Activated B cell treated with CpG ODN at 0.5 μM for 24 hours (primary cell): ENCODE measurements at regions of chr17 and their contacts with region 1.

Region 1: DNA sequence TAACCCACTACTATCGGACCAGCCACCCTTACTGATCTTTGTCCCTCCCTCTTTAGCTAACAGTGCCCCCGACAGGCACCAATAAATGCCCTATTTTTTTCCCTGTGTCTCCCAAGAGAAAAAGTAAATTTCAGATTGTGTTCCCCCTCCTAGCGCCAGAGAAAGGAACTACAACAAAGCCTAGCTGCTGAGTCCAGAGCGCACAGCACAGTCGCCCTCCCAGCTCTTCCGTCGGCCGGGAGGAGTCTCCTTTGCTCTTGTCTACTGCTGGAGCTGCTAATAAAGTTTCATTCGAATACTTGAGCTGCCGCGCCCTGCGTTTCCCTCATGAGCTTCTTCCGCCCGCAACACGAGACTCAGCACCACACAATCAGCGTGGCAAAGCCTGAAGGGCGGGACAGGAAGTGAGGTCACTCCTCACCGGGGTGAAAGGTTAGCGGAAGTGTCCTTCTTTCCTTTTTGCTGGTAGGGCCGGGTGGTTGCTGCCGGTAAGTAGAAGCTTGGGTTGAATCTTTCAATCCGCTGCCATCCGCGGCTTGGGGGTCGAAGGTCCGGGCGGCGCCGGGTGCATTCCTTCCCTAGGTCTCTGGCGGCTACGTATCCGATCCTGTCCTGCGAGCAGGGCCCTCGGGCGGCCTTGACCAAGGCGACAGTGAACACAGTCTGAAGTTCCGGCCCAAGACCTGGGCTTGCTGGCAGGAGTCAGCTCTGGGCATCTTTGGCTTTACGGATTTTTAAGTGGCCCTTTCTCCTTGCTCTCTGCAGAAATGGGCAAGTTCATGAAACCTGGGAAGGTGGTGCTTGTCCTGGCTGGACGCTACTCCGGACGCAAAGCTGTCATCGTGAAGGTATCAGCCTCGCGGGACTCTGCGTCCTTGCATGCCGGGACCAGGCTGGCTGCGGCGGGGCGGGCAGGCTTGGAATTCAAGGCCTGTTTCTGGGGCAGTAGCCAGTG is at the start of gene RPL27:
- DNase-seq: peak; percentile 95
- ATAC-seq: peak; percentile 95
- H3K4me3 Mint-ChIP-seq: peak within 1 kb of the TSS; percentile 98
- H3K27ac Mint-ChIP-seq: peak within 1 kb of the TSS; percentile 97
- H3K4me1 Mint-ChIP-seq: peaks cover 31% of the 10 kb centered on the region
- H3K27me3 Mint-ChIP-seq: no peaks in the 10 kb centered on the region
- CTCF ChIP-seq: peak; percentile 78
- total RNA-seq, gene RPL27: 1,189 and 1,266 TPM in 2 replicates

Region 2: DNA sequence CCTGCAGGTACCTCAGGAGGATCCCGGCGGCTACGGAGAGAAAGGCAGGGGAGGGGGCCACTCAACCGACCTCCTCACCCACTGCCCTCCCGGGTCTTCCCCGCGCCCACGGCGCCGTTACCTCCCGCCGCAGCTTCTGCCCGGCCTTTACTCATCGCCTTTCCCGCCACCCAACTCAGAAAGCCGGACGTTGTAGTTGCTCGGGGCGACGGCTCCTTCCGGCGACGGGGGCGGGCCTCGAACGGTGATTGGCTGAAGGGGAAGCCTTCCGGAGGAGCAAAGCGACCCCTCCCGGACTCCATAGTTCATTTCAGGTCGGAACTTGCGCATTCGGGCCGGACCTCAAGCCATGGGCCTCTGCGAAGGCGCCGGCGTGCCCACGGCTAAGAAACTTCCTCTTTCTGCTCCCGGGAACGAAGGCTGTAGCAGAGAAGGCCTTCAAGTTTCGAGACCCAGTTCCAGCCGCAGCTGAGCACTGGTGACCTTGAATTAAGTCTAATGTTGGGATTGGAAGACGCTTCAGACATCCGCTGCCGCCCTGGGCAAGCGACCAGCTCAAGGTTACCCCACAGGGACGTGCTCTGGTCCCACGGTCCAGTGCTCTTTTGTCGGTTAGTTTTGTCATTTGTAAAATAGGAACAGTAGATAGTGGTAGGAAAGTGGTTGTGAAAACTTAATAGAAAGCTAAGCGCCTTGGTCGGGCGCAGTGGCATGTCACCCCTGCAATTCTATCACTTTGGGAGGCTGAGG is 420.6 kb before region 1 on chr17 and contains the start of gene PSMC3IP:
- CTCF ChIA-PET with region 1: interaction called, 10 read pairs
- POLR2A ChIA-PET with region 1: interaction called, 15 read pairs
- intact Hi-C with region 1: loop called (anchors 1 kb)
- DNase-seq: peak; percentile 86
- ATAC-seq: peak; percentile 90
- H3K4me3 Mint-ChIP-seq: peak within 1 kb of the TSS; percentile 95
- H3K27ac Mint-ChIP-seq: peak within 1 kb of the TSS; percentile 97
- H3K4me1 Mint-ChIP-seq: peaks cover 38% of the 10 kb centered on the region
- H3K27me3 Mint-ChIP-seq: no peaks in the 10 kb centered on the region
- CTCF ChIP-seq: no peak
- total RNA-seq, gene PSMC3IP: 9.0 and 10.8 TPM in 2 replicates

Region 3: GRCh38 chr17:42798383-42799380 is 199.6 kb before region 1 on chr17 and contains the starts of genes CNTD1 and COA3:
- CTCF ChIA-PET with region 1: no interaction called
- POLR2A ChIA-PET with region 1: interaction called, 11 read pairs
- intact Hi-C with region 1: no loop called
- DNase-seq: peak; percentile 69
- ATAC-seq: peak; percentile 100
- H3K4me3 Mint-ChIP-seq: peak within 1 kb of the TSS; percentile 97
- H3K27ac Mint-ChIP-seq: peak within 1 kb of the TSS; percentile 81
- H3K4me1 Mint-ChIP-seq: peaks cover 28% of the 10 kb centered on the region
- H3K27me3 Mint-ChIP-seq: no peaks in the 10 kb centered on the region
- CTCF ChIP-seq: no peak
- total RNA-seq, gene CNTD1: not detected in 2 replicates
- total RNA-seq, gene COA3: 41.4 and 48.0 TPM in 2 replicates

Region 4: GRCh38 chr17:42843358-42843934 is 154.8 kb before region 1 on chr17:
- CTCF ChIA-PET with region 1: interaction called, 19 read pairs
- POLR2A ChIA-PET with region 1: interaction called, 8 read pairs
- intact Hi-C with region 1: loop called (anchors 1 kb)
- DNase-seq: no peak
- ATAC-seq: peak; percentile 45
- H3K4me3 Mint-ChIP-seq: no peak overlapping the region
- H3K27ac Mint-ChIP-seq: no peak overlapping the region
- H3K4me1 Mint-ChIP-seq: peaks cover 17% of the 10 kb centered on the region
- H3K27me3 Mint-ChIP-seq: no peaks in the 10 kb centered on the region
- CTCF ChIP-seq: no peak

Region 5: GRCh38 chr17:43024407-43025289 is 26.4 kb after region 1 on chr17 and contains the start of gene RND2:
- CTCF ChIA-PET with region 1: interaction called, 8 read pairs
- POLR2A ChIA-PET with region 1: interaction called, 27 read pairs
- intact Hi-C with region 1: loop called (anchors 1 kb)
- DNase-seq: peak; percentile 79
- ATAC-seq: peak; percentile 65
- H3K4me3 Mint-ChIP-seq: peak within 1 kb of the TSS; percentile 92
- H3K27ac Mint-ChIP-seq: peak within 1 kb of the TSS; percentile 87
- H3K4me1 Mint-ChIP-seq: peaks cover 24% of the 10 kb centered on the region
- H3K27me3 Mint-ChIP-seq: no peaks in the 10 kb centered on the region
- CTCF ChIP-seq: no peak
- total RNA-seq, gene RND2: 0.05 and 0.13 TPM in 2 replicates

Region 6: GRCh38 chr17:43211480-43212402 is 213.5 kb after region 1 on chr17 and contains the start of gene TMEM106A:
- CTCF ChIA-PET with region 1: interaction called, 4 read pairs
- POLR2A ChIA-PET with region 1: interaction called, 26 read pairs
- intact Hi-C with region 1: loop called (anchors 2 kb)
- DNase-seq: peak; percentile 69
- ATAC-seq: peak; percentile 89
- H3K4me3 Mint-ChIP-seq: peak within 1 kb of the TSS; percentile 100
- H3K27ac Mint-ChIP-seq: peak within 1 kb of the TSS; percentile 98
- H3K4me1 Mint-ChIP-seq: peaks cover 45% of the 10 kb centered on the region
- H3K27me3 Mint-ChIP-seq: no peaks in the 10 kb centered on the region
- CTCF ChIP-seq: no peak
- total RNA-seq, gene TMEM106A: 46.0 and 68.0 TPM in 2 replicates

Region 7: GRCh38 chr17:43367737-43368242 is 369.5 kb after region 1 on chr17:
- CTCF ChIA-PET with region 1: no interaction called
- POLR2A ChIA-PET with region 1: interaction called, 33 read pairs
- intact Hi-C with region 1: no loop called
- DNase-seq: no peak
- ATAC-seq: peak; percentile 45
- H3K4me3 Mint-ChIP-seq: peak overlapping the region; percentile 95
- H3K27ac Mint-ChIP-seq: peak overlapping the region; percentile 100
- H3K4me1 Mint-ChIP-seq: peaks cover 51% of the 10 kb centered on the region
- H3K27me3 Mint-ChIP-seq: no peaks in the 10 kb centered on the region
- CTCF ChIP-seq: no peak

Region 8: GRCh38 chr17:43578699-43579565 is 580.7 kb after region 1 on chr17:
- CTCF ChIA-PET with region 1: no interaction called
- POLR2A ChIA-PET with region 1: no interaction called
- intact Hi-C with region 1: no loop called
- DNase-seq: peak; percentile 63
- ATAC-seq: peak; percentile 95
- H3K4me3 Mint-ChIP-seq: peak overlapping the region; percentile 33
- H3K27ac Mint-ChIP-seq: peak overlapping the region; percentile 71
- H3K4me1 Mint-ChIP-seq: peaks cover 23% of the 10 kb centered on the region
- H3K27me3 Mint-ChIP-seq: peaks cover 4% of the 10 kb centered on the region
- CTCF ChIP-seq: no peak